Heart right ventricle (tissue), 16 donors: ENCODE measurements at regions of chr3 and their contacts with region 1.

Region 1: GRCh38 chr3:128698211-128699064 is 27.5 kb upstream of the RAB7A start:
- DNase-seq: peak in 1 of 2 donors; percentile 58
- ATAC-seq: peak; percentile 77 to 90 (median 89)
- H3K4me3 ChIP-seq: peak overlapping the region; percentile 48 to 79 (median 66)
- H3K27ac ChIP-seq: peak overlapping the region in 9 of 10 donors; percentile 77 to 86 (median 82)
- H3K4me1 ChIP-seq: peaks cover 0 to 36% (median 0%) of the 10 kb centered on the region in 9 donors
- H3K27me3 ChIP-seq: no peaks in the 10 kb centered on the region
- CTCF ChIP-seq: no peak

Region 2: DNA sequence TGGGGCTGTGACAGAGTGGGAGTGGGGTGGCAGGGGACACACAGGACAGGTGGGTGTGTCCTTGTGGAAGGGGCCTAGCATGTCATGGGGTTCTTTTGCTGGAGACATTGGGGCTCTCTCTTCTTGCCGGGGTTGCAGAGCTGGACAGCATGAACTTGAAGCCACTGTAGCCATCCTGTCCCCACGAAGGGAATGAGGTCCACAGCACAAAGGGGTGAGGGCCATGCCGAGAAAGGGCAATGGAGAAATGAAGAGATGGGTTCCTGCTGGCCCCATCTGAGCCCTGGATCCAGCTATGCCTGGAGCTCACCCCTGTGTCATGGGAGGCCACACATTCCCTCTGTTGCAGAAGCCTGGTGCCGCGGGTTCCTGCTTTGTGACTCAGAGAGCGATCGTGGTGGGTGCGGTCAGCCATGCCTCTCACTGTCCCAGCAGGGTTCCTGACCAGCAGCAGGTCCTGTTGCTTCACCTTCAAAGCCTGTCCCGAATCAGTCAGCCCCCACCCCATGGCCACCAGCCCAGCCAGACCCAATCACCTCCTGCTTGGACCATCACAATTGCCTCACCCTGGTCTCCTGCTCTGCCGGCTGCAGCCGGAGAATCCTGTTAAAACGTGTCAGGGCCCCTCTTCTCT is 281.7 kb before region 1 on chr3:
- intact Hi-C with region 1: no loop called
- DNase-seq: no peak
- ATAC-seq: no peak
- H3K4me3 ChIP-seq: no peak overlapping the region
- H3K27ac ChIP-seq: no peak overlapping the region
- H3K4me1 ChIP-seq: peaks cover 0 to 3% (median 0%) of the 10 kb centered on the region in 9 donors
- H3K27me3 ChIP-seq: no peaks in the 10 kb centered on the region
- CTCF ChIP-seq: no peak

Region 3: DNA sequence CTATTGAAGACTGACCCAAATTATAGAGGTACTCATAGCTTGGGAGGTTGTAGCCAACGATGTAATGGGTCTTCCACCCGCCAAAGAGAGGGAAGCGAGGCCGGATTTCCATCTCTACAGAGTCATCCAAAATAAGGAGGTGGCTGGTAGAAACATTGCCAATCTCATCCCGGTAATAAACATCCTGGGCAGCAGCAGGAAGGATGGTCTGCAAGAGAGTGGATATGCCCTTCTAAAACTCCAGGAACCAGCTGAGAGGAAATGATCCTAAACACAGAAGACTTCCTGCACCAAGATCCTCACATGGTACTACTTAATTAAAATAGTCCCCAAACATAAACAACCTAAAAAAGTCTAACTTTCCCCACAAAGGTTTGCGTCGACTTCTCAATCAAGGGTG is 68.5 kb before region 1 on chr3:
- intact Hi-C with region 1: loop called in 1 of 10 experiments (anchors 2 kb)
- DNase-seq: no peak
- ATAC-seq: no peak
- H3K4me3 ChIP-seq: no peak overlapping the region
- H3K27ac ChIP-seq: no peak overlapping the region
- H3K4me1 ChIP-seq: peaks cover 0 to 21% (median 10%) of the 10 kb centered on the region in 9 donors
- H3K27me3 ChIP-seq: no peaks in the 10 kb centered on the region
- CTCF ChIP-seq: no peak

Region 4: DNA sequence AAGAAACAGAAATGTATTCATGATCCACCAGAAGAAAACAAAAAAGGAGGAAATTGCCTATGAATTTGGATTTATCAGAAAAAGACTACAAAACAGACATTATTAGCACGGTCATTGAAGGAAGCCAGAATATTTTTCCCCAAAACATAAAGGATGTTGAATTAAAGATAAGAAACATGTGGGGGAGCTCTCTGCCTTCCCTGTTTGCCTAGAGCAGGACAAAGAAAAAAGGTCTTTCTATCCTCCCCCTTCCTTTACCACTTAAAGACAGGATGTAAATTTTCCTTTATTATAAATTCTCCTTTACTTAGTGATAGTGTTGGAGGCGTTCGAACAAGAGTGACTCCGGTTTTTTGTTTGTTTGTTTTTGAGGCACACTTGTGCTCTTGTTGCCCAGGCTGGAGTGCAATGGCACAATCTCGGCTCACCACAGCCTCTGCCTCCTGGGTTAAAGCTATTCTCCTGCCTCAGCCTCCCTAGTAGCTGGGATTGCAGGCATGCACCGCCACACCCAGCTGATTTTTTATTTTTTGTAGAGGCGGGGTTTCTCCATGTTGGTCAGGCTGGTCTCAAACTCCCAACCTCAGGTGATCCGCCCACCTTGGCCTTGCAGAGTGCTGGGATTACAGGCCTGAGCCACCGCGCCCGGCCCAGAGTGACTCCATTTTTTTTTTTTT is 32.9 kb before region 1 on chr3:
- intact Hi-C with region 1: loop called in 1 of 10 experiments (anchors 1 kb)
- DNase-seq: no peak
- ATAC-seq: no peak
- H3K4me3 ChIP-seq: no peak overlapping the region
- H3K27ac ChIP-seq: no peak overlapping the region
- H3K4me1 ChIP-seq: no peaks in the 10 kb centered on the region
- H3K27me3 ChIP-seq: no peaks in the 10 kb centered on the region
- CTCF ChIP-seq: peak in 3 of 9 donors; percentile 6 to 42 (median 18)